ENCODE measurements at regions of chr2 and their contacts with region 1.

Region 1: DNA sequence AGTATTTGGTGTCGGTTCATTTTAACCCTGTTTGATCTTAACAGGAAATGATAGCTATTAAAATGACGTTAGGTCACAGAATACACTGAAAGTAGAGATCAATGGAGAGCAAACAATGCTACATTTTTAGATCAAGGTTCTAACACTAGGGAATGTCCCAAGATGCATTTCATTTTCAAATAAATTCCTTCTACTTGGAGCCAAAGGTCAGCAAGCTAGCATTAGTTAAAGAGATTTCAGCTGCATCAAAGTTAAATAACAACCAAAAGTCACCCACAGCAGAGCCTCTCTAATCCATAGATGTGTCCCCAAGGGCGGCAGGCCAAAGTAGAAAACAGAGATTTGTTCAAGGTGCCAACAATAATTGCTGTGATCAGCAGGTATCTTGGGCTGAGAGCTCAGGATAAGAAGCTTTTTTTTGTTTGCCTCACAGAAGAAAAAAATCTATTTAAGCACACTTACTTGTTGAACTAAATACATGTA is 1233.6 kb upstream of the TMEFF2 start:
- DNase-seq: peak; percentile 80 to 88
- H3K4me3 ChIP-seq: no peak overlapping the region
- H3K4me3 Mint-ChIP-seq: peak overlapping the region; percentile 44
- H3K27ac Mint-ChIP-seq: peak overlapping the region; percentile 31
- H3K4me1 ChIP-seq: peaks cover 34% of the 10 kb centered on the region
- H3K4me1 Mint-ChIP-seq: peaks cover 10% of the 10 kb centered on the region
- H3K27me3 ChIP-seq: no peaks in the 10 kb centered on the region
- H3K27me3 Mint-ChIP-seq: no peaks in the 10 kb centered on the region
- CTCF ChIP-seq: no peak

Region 2: GRCh38 chr2:193331676-193332075 is 96.7 kb before region 1 on chr2:
- CTCF ChIA-PET with region 1: no interaction called
- POLR2A ChIA-PET with region 1: no interaction called
- intact Hi-C with region 1: no loop called
- DNase-seq: no peak
- H3K4me3 ChIP-seq: no peak overlapping the region
- H3K4me3 Mint-ChIP-seq: no peak overlapping the region
- H3K27ac Mint-ChIP-seq: no peak overlapping the region
- H3K4me1 ChIP-seq: no peaks in the 10 kb centered on the region
- H3K4me1 Mint-ChIP-seq: no peaks in the 10 kb centered on the region
- H3K27me3 ChIP-seq: no peaks in the 10 kb centered on the region
- H3K27me3 Mint-ChIP-seq: no peaks in the 10 kb centered on the region
- CTCF ChIP-seq: no peak

Region 3: DNA sequence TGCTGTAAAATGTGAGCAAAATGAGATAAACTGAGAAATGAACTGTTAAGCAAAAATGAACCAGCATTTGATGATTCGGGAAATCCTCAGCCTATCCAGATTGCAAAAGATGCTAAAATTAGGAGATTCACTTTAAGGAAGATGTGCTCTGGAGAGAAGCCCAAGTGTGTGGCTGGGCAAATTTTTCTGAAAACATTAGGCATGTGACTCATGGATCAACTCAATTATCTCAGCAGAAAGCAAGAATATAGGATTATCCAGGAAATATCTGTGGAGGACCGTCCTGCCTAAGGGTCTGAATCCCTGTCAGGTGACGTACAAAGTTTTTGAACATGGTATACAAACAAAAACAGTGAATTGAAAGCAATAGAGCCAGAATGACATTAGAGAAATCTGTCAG is 34.6 kb after region 1 on chr2:
- CTCF ChIA-PET with region 1: no interaction called
- POLR2A ChIA-PET with region 1: no interaction called
- intact Hi-C with region 1: loop called (anchors 2 kb)
- DNase-seq: no peak
- H3K4me3 ChIP-seq: no peak overlapping the region
- H3K4me3 Mint-ChIP-seq: no peak overlapping the region
- H3K27ac Mint-ChIP-seq: no peak overlapping the region
- H3K4me1 ChIP-seq: peaks cover 10% of the 10 kb centered on the region
- H3K4me1 Mint-ChIP-seq: peaks cover 11% of the 10 kb centered on the region
- H3K27me3 ChIP-seq: no peaks in the 10 kb centered on the region
- H3K27me3 Mint-ChIP-seq: no peaks in the 10 kb centered on the region
- CTCF ChIP-seq: no peak

Region 4: GRCh38 chr2:193518041-193518817 is 89.9 kb after region 1 on chr2:
- CTCF ChIA-PET with region 1: no interaction called
- POLR2A ChIA-PET with region 1: interaction called, 4 read pairs
- intact Hi-C with region 1: loop called (anchors 1 kb)
- DNase-seq: peak in 1 of 2 experiments; percentile 26
- H3K4me3 ChIP-seq: no peak overlapping the region
- H3K4me3 Mint-ChIP-seq: no peak overlapping the region
- H3K27ac Mint-ChIP-seq: peak overlapping the region; percentile 88
- H3K4me1 ChIP-seq: peaks cover 24% of the 10 kb centered on the region
- H3K4me1 Mint-ChIP-seq: peaks cover 17% of the 10 kb centered on the region
- H3K27me3 ChIP-seq: no peaks in the 10 kb centered on the region
- H3K27me3 Mint-ChIP-seq: no peaks in the 10 kb centered on the region
- CTCF ChIP-seq: no peak

Region 5: DNA sequence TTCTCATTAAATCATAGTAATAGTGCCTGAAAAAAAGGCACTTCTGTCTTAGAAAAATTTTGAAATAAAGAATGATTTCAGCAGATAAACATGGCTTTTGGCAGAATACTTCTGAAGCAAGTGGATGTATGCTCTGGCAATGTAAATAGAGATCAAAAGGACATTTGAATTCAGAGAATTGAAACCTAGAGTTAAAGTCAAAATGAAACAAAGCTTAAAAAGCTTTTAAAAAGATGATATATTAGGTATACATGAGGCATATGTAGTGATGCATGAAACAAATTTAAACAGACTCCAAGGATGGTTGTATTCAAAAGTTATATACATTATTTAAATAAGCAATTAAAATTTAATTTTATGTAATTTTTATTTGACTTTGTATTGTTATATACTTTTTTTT is 110.8 kb after region 1 on chr2:
- CTCF ChIA-PET with region 1: no interaction called
- POLR2A ChIA-PET with region 1: no interaction called
- intact Hi-C with region 1: loop called (anchors 1 kb)
- DNase-seq: no peak
- H3K4me3 ChIP-seq: no peak overlapping the region
- H3K4me3 Mint-ChIP-seq: no peak overlapping the region
- H3K27ac Mint-ChIP-seq: no peak overlapping the region
- H3K4me1 ChIP-seq: peaks cover 29% of the 10 kb centered on the region
- H3K4me1 Mint-ChIP-seq: peaks cover 16% of the 10 kb centered on the region
- H3K27me3 ChIP-seq: no peaks in the 10 kb centered on the region
- H3K27me3 Mint-ChIP-seq: no peaks in the 10 kb centered on the region
- CTCF ChIP-seq: no peak

Region 6: GRCh38 chr2:193960874-193961273 is 532.5 kb after region 1 on chr2:
- CTCF ChIA-PET with region 1: no interaction called
- POLR2A ChIA-PET with region 1: no interaction called
- intact Hi-C with region 1: no loop called
- DNase-seq: no peak
- H3K4me3 ChIP-seq: no peak overlapping the region
- H3K4me3 Mint-ChIP-seq: no peak overlapping the region
- H3K27ac Mint-ChIP-seq: no peak overlapping the region
- H3K4me1 ChIP-seq: 0 out of 2 replicates have a peak, but pooled peaks cover 4% of the 10 kb centered on the region
- H3K4me1 Mint-ChIP-seq: no peaks in the 10 kb centered on the region
- H3K27me3 ChIP-seq: no peaks in the 10 kb centered on the region
- H3K27me3 Mint-ChIP-seq: no peaks in the 10 kb centered on the region
- CTCF ChIP-seq: no peak